ENCODE measurements at regions of chr5 and their contacts with region 1.

Region 1: DNA sequence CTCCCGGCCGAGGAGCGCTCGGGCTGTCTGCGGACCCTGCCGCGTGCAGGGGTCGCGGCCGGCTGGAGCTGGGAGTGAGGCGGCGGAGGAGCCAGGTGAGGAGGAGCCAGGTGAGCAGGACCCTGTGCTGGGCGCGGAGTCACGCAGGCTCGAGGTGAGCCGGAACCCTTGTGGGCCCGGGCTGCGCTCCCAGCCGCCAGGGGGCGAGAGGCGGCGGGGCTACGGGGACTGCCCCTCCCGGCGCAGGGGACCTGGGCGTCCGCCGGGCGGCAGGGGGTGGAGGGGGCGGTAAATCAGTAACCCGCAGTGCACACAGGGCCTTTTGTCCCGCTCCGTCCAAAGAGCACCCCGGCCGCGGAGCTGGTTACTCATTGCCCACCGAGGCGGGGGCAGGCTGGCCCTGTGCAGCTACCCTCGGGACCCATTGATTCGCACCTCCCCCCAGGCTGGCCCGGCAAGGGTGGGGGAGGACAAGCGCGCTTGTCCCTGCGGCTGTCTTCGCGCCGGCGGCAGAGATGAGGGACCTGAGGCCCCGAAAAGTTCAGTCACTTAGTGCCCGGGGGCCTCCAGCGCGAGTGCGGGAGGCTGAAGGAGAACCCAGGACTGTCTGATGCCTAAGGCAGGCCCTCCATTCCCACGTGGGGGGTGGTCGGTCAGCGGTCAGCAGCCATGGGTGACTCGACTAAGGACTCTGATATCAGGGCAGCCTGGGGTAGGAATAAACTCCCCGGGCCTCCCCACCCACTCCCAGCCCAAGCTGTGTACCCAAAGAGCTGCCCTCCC is 400 bp downstream of the FGFR4 start:
- DNase-seq: peak; percentile 35 to 83 (median 70)
- ATAC-seq: peak; percentile 82
- H3K4me3 ChIP-seq: peak overlapping the region; percentile 43 to 49
- H3K4me3 Mint-ChIP-seq: peak overlapping the region; percentile 49
- H3K27ac ChIP-seq: no peak overlapping the region
- H3K27ac Mint-ChIP-seq: no peak overlapping the region
- H3K4me1 ChIP-seq: peaks cover 10% of the 10 kb centered on the region
- H3K4me1 Mint-ChIP-seq: peaks cover 8% of the 10 kb centered on the region
- H3K27me3 ChIP-seq: peaks cover 0 to 2% of the 10 kb centered on the region in 2 experiments
- H3K27me3 Mint-ChIP-seq: peaks cover 20% of the 10 kb centered on the region
- CTCF ChIP-seq: peak; percentile 74

Region 2: DNA sequence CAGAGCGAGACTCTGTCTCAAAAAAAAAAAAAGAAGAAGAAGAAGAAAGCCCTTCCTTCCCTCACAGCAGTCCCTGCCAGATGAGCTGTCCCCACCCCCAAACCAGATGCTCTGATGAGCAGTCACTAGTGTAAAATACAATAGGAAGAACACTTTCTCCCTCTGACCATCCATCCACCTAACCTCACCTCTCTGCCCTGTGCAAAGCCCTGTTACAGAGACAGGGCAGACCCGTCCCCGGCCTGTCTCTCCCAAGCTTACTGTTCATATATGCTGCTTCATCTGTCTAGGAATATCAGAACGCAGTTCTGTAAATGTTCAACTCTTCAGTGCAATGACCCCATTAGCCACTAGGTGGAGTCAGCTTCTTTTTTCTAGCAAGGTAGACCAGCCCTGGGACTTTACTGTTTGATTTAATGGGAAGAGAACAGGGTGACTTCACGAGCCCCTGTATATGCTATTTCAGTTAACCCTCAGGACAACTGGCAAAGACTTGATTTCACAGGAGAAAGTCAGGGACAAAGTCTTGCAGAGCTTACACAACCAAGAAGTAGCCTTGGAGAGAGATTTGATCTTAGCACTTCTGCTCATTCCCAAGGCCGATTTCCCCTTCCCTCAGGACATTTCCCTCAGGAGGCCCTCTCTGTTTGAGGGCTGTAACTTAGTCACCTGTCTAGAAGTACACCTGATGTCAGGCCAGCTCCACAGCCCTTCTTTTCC is 15.3 kb before region 1 on chr5:
- CTCF ChIA-PET with region 1: interaction called, 30 read pairs
- POLR2A ChIA-PET with region 1: interaction called, 4 read pairs
- intact Hi-C with region 1: no loop called
- DNase-seq: peak; percentile 41 to 76 (median 70)
- ATAC-seq: peak; percentile 77
- H3K4me3 ChIP-seq: no peak overlapping the region
- H3K4me3 Mint-ChIP-seq: no peak overlapping the region
- H3K27ac ChIP-seq: no peak overlapping the region
- H3K27ac Mint-ChIP-seq: no peak overlapping the region
- H3K4me1 ChIP-seq: no peaks in the 10 kb centered on the region
- H3K4me1 Mint-ChIP-seq: peaks cover 8% of the 10 kb centered on the region
- H3K27me3 ChIP-seq: no peaks in the 10 kb centered on the region
- H3K27me3 Mint-ChIP-seq: no peaks in the 10 kb centered on the region
- CTCF ChIP-seq: peak; percentile 89

Region 3: GRCh38 chr5:177425801-177426565 is 338.9 kb after region 1 on chr5:
- CTCF ChIA-PET with region 1: no interaction called
- POLR2A ChIA-PET with region 1: no interaction called
- intact Hi-C with region 1: no loop called
- DNase-seq: peak; percentile 99 to 100 (median 99)
- ATAC-seq: peak; percentile 80
- H3K4me3 ChIP-seq: peak overlapping the region; percentile 63 to 65
- H3K4me3 Mint-ChIP-seq: peak overlapping the region; percentile 91
- H3K27ac ChIP-seq: peak overlapping the region; percentile 86 to 92
- H3K27ac Mint-ChIP-seq: peak overlapping the region; percentile 98
- H3K4me1 ChIP-seq: peaks cover 46% of the 10 kb centered on the region
- H3K4me1 Mint-ChIP-seq: peaks cover 53% of the 10 kb centered on the region
- H3K27me3 ChIP-seq: no peaks in the 10 kb centered on the region
- H3K27me3 Mint-ChIP-seq: no peaks in the 10 kb centered on the region
- CTCF ChIP-seq: no peak